MCF 10A (cell line): ENCODE measurements at regions of chr10 and their contacts with region 1.

Region 1: DNA sequence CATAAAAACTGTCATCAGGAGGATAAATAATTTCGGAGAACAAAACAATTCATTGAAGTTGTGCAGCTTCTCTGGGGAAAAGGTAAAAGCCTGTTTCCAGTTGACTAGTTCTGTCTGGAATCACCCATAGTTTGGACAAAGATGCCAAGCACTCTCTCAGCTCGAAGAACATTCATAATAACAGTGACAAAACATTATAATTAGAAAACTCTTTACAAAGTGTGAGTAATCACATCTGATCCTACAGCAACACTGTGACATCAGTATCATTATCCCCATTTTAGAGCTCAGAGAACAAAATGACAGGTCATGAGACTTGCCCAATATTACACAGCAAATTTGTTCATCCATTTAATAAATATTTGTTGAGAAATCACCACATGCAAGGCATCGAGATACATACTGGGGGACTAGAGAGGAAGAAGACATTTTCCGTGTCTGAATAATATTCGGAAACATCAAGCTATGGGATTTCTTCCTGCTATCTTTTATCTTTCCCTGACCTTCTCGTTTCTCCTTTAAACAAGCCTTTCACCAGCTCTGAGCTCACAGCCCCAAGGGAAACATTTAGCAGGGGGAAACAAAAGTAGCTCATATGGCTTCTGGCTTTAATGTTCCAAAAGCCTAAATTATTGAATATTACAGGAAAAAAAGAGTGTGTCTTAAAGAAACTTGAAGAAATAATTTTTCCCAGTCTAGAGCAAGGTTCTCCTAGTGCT is 123.3 kb upstream of the GHITM start:
- DNase-seq: no peak
- H3K4me3 Mint-ChIP-seq: no peak overlapping the region
- H3K27ac Mint-ChIP-seq: no peak overlapping the region
- H3K4me1 Mint-ChIP-seq: no peaks in the 10 kb centered on the region
- H3K27me3 Mint-ChIP-seq: no peaks in the 10 kb centered on the region
- CTCF ChIP-seq: no peak

Region 2: DNA sequence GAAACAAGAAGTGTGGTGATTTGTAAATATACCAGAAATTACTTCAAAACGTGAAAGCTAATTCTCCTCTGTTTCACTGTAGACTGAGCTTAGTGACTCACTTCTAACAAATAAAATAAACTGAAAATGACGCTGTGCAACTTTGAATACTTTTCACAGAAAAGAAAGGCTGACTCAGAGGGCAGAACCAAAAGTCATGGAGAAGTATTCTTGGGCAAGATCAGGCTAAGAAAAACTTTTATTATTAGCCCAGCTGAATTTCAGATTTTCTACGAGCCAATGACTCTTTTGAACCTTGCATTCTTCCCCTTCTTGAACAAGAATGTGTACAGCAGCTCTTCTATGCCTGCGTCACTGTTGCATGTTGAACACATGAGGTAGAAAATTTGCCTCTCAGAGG is 404.0 kb before region 1 on chr10:
- CTCF ChIA-PET with region 1: no interaction called
- POLR2A ChIA-PET with region 1: no interaction called
- intact Hi-C with region 1: no loop called
- DNase-seq: peak; percentile 68
- H3K4me3 Mint-ChIP-seq: peak overlapping the region; percentile 40
- H3K27ac Mint-ChIP-seq: peak overlapping the region; percentile 81
- H3K4me1 Mint-ChIP-seq: peaks cover 23% of the 10 kb centered on the region
- H3K27me3 Mint-ChIP-seq: no peaks in the 10 kb centered on the region
- CTCF ChIP-seq: no peak

Region 3: GRCh38 chr10:84026544-84027257 is 10.7 kb after region 1 on chr10:
- CTCF ChIA-PET with region 1: interaction called, 24 read pairs
- POLR2A ChIA-PET with region 1: no interaction called
- intact Hi-C with region 1: no loop called
- DNase-seq: peak; percentile 40
- H3K4me3 Mint-ChIP-seq: no peak overlapping the region
- H3K27ac Mint-ChIP-seq: no peak overlapping the region
- H3K4me1 Mint-ChIP-seq: no peaks in the 10 kb centered on the region
- H3K27me3 Mint-ChIP-seq: no peaks in the 10 kb centered on the region
- CTCF ChIP-seq: peak; percentile 77